IMR-90 (cell line): ENCODE measurements at regions of chr15 and their contacts with region 1.

Region 1: DNA sequence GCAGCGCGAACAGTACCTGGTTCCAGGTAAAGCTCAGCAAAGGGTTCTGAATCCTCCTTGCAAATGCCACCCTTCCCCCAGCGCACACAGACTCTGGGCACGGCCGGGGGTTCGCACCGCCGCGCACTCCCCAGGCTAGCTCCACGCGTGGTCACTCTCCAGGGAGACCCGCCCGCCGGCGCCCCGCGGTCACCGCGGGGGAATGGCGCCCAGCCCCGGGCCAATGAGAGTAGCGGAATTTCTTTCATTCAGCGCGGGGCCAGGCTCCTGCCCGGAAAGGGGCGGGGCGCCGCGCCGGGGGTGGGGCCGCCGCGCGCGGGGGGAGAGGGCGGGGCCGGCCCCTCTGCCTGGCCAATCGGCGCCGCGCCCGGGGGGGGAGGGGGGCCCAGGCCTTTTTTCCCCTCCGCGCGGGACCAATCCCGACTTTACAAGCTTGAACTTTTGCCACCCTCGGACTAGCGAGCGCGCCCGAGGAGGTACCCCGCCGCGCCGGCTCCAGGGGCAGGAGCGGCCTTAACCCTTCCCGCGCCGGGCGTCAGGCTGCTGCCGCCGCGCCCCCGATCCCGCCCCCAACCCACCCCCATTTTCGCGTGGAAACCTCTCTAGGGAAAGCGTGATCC is 1.1 kb upstream of the SMAD6 start:
- DNase-seq: peak; percentile 91
- ATAC-seq: peak; percentile 80
- H3K4me3 ChIP-seq: peak overlapping the region; percentile 68
- H3K27ac ChIP-seq: peak overlapping the region; percentile 90
- H3K4me1 ChIP-seq: peaks cover 9% of the 10 kb centered on the region
- H3K27me3 ChIP-seq: no peaks in the 10 kb centered on the region
- CTCF ChIP-seq: no peak
- POLR2A ChIP-seq: no peak; the same call in 1 of the 2 replicates
- RAD21 ChIP-seq: no peak

Region 2: GRCh38 chr15:66504563-66505429 is 196.1 kb before region 1 on chr15 and contains the starts of genes RPL4 and ZWILCH:
- CTCF ChIA-PET with region 1: no interaction called
- POLR2A ChIA-PET with region 1: no interaction called
- dilution Hi-C with region 1: no loop called
- in situ Hi-C with region 1: no loop called
- intact Hi-C with region 1: loop called (anchors 10 kb)
- DNase-seq: peak; percentile 87
- ATAC-seq: peak; percentile 87
- H3K4me3 ChIP-seq: peak within 1 kb of the TSS; percentile 59
- H3K27ac ChIP-seq: peak within 1 kb of the TSS; percentile 95
- H3K4me1 ChIP-seq: peaks cover 1% of the 10 kb centered on the region; the same call in 1 of the 2 replicates
- H3K27me3 ChIP-seq: no peaks in the 10 kb centered on the region
- CTCF ChIP-seq: no peak
- POLR2A ChIP-seq: peak; percentile 98
- RAD21 ChIP-seq: no peak
- total RNA-seq, gene RPL4: 6,510 and 13,244 TPM in 2 replicates
- total RNA-seq, gene ZWILCH: 22.2 and 28.1 TPM in 2 replicates

Region 3: DNA sequence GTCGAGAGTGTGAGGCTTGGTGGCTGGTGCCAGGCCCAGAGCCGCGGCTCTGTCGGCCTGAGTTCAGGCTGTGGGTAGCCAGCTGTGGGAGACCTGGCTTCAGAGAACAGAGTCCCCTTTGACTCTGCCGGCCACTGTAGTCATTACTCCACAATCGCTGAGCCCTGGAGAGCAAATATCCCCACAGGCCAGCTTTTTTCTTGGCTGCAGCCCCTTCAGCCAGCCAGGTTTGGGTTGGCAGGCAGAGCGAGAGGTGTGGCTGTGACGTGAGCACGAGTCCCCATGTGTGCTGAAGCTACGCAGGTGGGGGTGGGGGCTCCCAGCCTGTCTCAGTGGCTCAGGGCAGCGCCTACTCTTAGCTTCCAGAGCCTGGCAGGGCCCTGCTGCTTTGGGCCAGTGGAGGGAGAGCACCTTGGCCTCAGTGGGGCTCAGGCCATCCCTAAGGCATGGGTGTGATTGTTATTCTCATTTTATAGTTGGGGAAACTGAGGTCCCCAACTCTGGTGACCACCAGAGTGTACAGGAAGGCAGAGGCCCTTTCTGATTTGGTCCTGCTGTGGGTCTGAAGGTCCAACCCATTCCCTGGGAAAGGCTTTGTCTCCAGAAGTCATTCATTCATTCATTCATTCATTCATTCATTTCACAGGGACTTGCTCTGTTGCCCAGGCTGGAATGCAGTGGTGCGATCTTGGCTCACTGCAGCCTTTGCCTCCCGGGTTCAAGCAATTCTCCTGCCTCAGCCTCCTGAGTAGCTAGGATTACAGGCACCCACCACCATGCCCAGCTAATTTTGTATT is 89.5 kb before region 1 on chr15:
- CTCF ChIA-PET with region 1: no interaction called
- POLR2A ChIA-PET with region 1: no interaction called
- dilution Hi-C with region 1: no loop called
- in situ Hi-C with region 1: loop called (anchors 5 kb)
- intact Hi-C with region 1: no loop called
- DNase-seq: no peak
- ATAC-seq: peak; percentile 35
- H3K4me3 ChIP-seq: no peak overlapping the region
- H3K27ac ChIP-seq: no peak overlapping the region
- H3K4me1 ChIP-seq: no peaks in the 10 kb centered on the region
- H3K27me3 ChIP-seq: peaks cover 5% of the 10 kb centered on the region; the same call in 1 of the 2 replicates
- CTCF ChIP-seq: no peak
- POLR2A ChIP-seq: no peak
- RAD21 ChIP-seq: no peak

Region 4: GRCh38 chr15:66747886-66748707 is 47.2 kb after region 1 on chr15:
- CTCF ChIA-PET with region 1: no interaction called
- POLR2A ChIA-PET with region 1: no interaction called
- dilution Hi-C with region 1: no loop called
- in situ Hi-C with region 1: no loop called
- intact Hi-C with region 1: loop called (anchors 5 kb)
- DNase-seq: peak; percentile 85
- ATAC-seq: peak; percentile 72
- H3K4me3 ChIP-seq: no peak overlapping the region
- H3K27ac ChIP-seq: peak overlapping the region; percentile 95
- H3K4me1 ChIP-seq: peaks cover 65% of the 10 kb centered on the region
- H3K27me3 ChIP-seq: no peaks in the 10 kb centered on the region
- CTCF ChIP-seq: no peak
- POLR2A ChIP-seq: no peak
- RAD21 ChIP-seq: no peak

Region 5: DNA sequence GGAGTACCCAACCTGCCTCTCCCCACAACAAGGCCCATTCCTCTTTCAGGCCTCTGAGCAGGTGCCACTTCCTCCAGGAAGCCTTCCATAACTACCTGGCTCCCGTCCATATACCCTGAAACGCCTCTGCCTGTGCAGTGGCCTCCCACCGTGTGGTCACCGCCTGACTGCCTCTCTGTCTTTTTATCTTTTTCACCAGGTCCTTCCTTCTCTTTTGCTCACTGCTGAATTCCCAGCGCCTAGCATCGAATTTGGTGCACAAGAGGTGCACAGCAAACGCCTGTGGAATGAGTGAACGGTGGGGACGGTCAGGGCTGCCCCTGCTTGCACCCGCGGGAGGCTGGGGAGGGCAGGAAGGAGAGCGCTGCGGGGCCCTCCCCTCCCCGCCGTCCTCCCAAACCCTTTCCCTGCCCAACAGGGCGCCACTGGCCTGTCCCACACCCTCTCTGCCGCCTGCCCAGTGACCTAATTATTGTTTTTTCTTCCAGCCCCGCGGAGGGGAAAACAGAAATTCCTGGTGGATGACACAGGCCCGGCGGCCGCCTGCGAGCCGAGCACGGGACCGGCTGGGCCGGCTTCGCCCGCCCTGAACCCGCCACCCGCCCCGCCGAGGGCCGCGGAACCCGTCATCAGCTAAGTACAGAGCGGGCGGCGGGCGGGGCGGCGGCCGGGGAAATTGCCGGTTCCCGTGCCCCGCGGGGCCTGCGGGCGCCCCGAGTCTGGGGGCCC is 141.2 kb after region 1 on chr15:
- CTCF ChIA-PET with region 1: no interaction called
- POLR2A ChIA-PET with region 1: interaction called, 6 read pairs
- dilution Hi-C with region 1: no loop called
- in situ Hi-C with region 1: loop called (anchors 25 kb)
- intact Hi-C with region 1: no loop called
- DNase-seq: peak; percentile 89
- ATAC-seq: peak; percentile 94
- H3K4me3 ChIP-seq: peak overlapping the region; percentile 28
- H3K27ac ChIP-seq: peak overlapping the region; percentile 98
- H3K4me1 ChIP-seq: peaks cover 29% of the 10 kb centered on the region
- H3K27me3 ChIP-seq: no peaks in the 10 kb centered on the region
- CTCF ChIP-seq: 0 out of 2 replicates have a peak, but pooled peaks have one; percentile 1
- POLR2A ChIP-seq: peak; percentile 61
- RAD21 ChIP-seq: no peak; the same call in 1 of the 2 replicates

Region 6: GRCh38 chr15:67109141-67110034 is 408.5 kb after region 1 on chr15:
- CTCF ChIA-PET with region 1: no interaction called
- POLR2A ChIA-PET with region 1: no interaction called
- dilution Hi-C with region 1: no loop called
- in situ Hi-C with region 1: no loop called
- intact Hi-C with region 1: no loop called
- DNase-seq: peak; percentile 99
- ATAC-seq: peak; percentile 42
- H3K4me3 ChIP-seq: no peak overlapping the region
- H3K27ac ChIP-seq: peak overlapping the region; percentile 95
- H3K4me1 ChIP-seq: peaks cover 54% of the 10 kb centered on the region
- H3K27me3 ChIP-seq: no peaks in the 10 kb centered on the region
- CTCF ChIP-seq: no peak
- POLR2A ChIP-seq: no peak; the same call in 1 of the 2 replicates
- RAD21 ChIP-seq: peak; percentile 23; the same call in 1 of the 2 replicates